IMR-90 (cell line): ENCODE measurements at regions of chr16 and their contacts with region 1.

Region 1: GRCh38 chr16:28549390-28549789 is 4.3 kb upstream of the SGF29 start:
- DNase-seq: peak; percentile 53
- ATAC-seq: peak; percentile 15; the same call in 1 of the 2 replicates
- H3K4me3 ChIP-seq: no peak overlapping the region
- H3K27ac ChIP-seq: no peak overlapping the region
- H3K4me1 ChIP-seq: 0 out of 2 replicates have a peak, but pooled peaks cover under 1% of the 10 kb centered on the region
- H3K27me3 ChIP-seq: peaks cover 7% of the 10 kb centered on the region
- CTCF ChIP-seq: peak; percentile 72
- POLR2A ChIP-seq: no peak
- RAD21 ChIP-seq: peak; percentile 77

Region 2: DNA sequence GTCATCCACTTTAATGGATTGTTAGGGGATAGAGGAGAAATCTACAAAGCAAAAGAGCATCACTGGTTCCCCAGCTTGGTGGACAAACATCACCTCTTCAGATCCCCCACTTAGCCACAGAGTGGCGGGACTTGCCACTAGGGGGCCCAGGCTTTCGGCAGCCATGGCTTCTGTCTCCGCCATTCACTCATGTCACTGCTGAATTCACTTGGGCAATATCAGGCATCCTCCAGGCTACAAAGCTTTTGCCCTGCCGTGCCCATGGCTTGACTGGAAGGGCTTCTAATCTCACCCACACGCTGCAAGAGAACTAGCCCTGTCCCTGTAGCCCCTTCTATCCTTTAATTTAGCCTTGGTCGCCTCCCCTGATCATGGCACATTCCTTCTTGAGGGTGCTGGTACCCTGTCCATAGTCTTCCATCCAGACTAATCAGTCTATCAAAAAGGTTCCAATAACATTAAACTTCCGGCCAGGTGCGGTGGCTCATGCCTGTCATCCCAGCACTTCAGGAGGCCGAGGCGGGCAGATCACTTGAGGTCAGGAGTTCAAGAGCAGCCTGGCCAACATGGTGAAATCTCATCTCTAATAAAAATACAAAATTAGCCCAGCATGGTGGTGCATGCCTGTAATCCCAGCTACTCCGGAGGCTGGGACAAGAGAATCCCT is 222.3 kb before region 1 on chr16:
- CTCF ChIA-PET with region 1: interaction called, 3 read pairs
- POLR2A ChIA-PET with region 1: no interaction called
- dilution Hi-C with region 1: no loop called
- in situ Hi-C with region 1: loop called (anchors 10 kb)
- intact Hi-C with region 1: no loop called
- DNase-seq: peak; percentile 34
- ATAC-seq: peak; percentile 87
- H3K4me3 ChIP-seq: no peak overlapping the region
- H3K27ac ChIP-seq: no peak overlapping the region
- H3K4me1 ChIP-seq: no peaks in the 10 kb centered on the region
- H3K27me3 ChIP-seq: no peaks in the 10 kb centered on the region; the same call in 1 of the 2 replicates
- CTCF ChIP-seq: peak; percentile 70
- POLR2A ChIP-seq: no peak
- RAD21 ChIP-seq: peak; percentile 57

Region 3: GRCh38 chr16:28513484-28514181 is 35.8 kb before region 1 on chr16:
- CTCF ChIA-PET with region 1: no interaction called
- POLR2A ChIA-PET with region 1: no interaction called
- dilution Hi-C with region 1: no loop called
- in situ Hi-C with region 1: no loop called
- intact Hi-C with region 1: no loop called
- DNase-seq: no peak
- ATAC-seq: no peak
- H3K4me3 ChIP-seq: no peak overlapping the region
- H3K27ac ChIP-seq: no peak overlapping the region
- H3K4me1 ChIP-seq: no peaks in the 10 kb centered on the region
- H3K27me3 ChIP-seq: no peaks in the 10 kb centered on the region
- CTCF ChIP-seq: no peak
- POLR2A ChIP-seq: no peak
- RAD21 ChIP-seq: no peak

Region 4: GRCh38 chr16:28924732-28925385 is 375.5 kb after region 1 on chr16 and contains the start of gene RABEP2:
- CTCF ChIA-PET with region 1: no interaction called
- POLR2A ChIA-PET with region 1: no interaction called
- dilution Hi-C with region 1: no loop called
- in situ Hi-C with region 1: no loop called
- intact Hi-C with region 1: no loop called
- DNase-seq: peak; percentile 78
- ATAC-seq: peak; percentile 97
- H3K4me3 ChIP-seq: peak within 1 kb of the TSS; percentile 98
- H3K27ac ChIP-seq: peak within 1 kb of the TSS; percentile 96
- H3K4me1 ChIP-seq: peaks cover 2% of the 10 kb centered on the region; the same call in 1 of the 2 replicates
- H3K27me3 ChIP-seq: no peaks in the 10 kb centered on the region
- CTCF ChIP-seq: no peak
- POLR2A ChIP-seq: no peak
- RAD21 ChIP-seq: no peak
- total RNA-seq, gene RABEP2: 12.2 and 14.4 TPM in 2 replicates